H1 (cell line): ENCODE measurements at regions of chr17 and their contacts with region 1.

Region 1: DNA sequence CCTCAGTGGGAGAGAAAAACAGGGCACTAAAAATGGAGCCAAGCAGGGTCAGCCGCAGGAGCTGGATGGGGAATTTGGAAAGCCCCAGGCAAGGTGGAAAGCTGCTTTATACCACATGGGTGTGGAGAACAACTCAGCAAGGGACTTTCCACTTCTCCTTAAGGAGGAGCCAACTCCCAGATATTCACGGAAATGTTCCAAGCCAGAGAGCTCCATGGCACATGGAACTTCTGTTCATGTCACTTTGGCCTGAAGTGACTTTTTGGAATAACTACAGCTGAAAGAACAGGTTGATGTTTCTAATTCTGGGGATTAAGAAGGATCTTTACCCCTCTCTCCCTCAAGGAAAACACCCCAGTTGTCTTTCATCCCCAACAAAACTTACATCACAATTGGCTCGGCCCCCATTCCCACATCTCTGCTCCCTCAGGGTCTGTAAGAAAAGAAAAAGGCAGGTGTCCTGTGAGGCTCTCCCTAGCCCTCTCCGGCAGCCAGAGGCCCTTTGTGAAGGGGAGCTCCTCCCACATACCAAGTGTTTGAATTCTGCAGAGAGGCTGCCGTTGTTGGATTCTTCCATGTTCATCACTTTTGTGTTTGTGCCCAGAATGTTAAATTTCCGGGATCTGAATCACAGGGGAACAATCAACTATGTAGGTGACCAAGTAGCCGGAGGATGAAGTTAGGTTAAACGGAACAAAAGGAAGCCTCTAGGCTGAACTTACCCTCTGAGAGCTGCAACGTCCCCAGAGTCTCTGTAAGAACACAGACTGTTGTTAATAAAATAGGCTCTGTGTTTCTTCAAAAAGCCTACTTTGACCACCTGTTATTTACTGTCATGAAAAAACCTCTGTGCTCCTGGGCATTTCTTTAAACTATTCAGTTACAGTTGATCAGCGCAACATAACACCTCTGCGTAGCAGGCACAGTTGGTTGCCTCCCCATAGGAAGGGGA is 41.0 kb downstream of the STAT5A start:
- DNase-seq: peak; percentile 74 to 89
- H3K4me3 ChIP-seq: peak overlapping the region in 2 of 4 experiments; percentile 17 to 39; a peak in 4 of 8 replicates
- H3K27ac ChIP-seq: peak overlapping the region; percentile 86
- H3K4me1 ChIP-seq: peaks cover 0 to 20% (median 9%) of the 10 kb centered on the region in 4 experiments; a peak in 5 of 7 replicates
- H3K27me3 ChIP-seq: no peaks in the 10 kb centered on the region
- CTCF ChIP-seq: no peak
- EP300 ChIP-seq: peak in 1 of 2 experiments; percentile 63; a peak in 1 of 3 replicates
- POLR2A ChIP-seq: peak in 1 of 2 experiments; percentile 73; a peak in 2 of 3 replicates
- RAD21 ChIP-seq: no peak

Region 2: DNA sequence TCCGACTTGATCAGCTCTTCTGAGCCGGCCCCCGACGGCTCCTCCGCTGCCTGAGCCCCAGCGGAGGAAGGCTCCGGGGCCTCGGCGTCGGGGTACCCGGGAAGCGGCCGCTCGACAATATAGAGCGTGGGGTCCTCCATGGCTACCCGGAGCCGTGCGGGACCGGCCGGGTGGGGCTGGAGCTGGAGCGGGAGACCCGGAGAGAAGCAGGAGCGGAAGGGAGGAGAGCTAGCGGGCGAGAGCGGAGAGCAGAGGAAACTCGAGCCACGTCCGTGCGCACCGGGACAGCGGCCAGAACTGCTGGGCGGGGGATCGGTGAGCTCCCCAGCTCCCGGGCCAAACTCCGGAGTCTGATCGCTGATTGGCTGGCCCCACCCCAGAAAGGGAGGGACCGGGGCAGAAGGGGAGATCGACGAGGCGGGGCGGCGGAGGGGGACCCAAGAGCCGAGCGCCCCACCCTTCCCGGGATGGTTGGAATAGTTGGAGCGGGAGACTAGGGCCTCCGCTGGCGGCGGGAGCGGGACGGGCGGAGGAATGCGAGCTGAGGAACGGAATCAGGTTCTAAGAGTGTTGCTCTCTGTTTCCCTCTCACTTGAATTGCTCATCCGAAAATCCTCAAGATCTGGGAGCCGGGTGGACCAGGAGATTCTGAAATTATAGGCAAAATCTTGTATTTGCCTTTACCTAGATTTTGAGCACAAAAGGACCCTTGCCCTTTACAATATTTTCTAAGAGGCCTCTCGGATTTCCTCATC is 93.8 kb after region 1 on chr17 and contains the start of gene CAVIN1:
- CTCF ChIA-PET with region 1: interaction called, 542 read pairs
- POLR2A ChIA-PET with region 1: interaction called, 15 read pairs
- DNase-seq: peak; percentile 89 to 94
- H3K4me3 ChIP-seq: peak within 1 kb of the TSS; percentile 73 to 99 (median 86)
- H3K27ac ChIP-seq: no peak within 1 kb of the TSS
- H3K4me1 ChIP-seq: peaks cover 0 to 17% (median 8%) of the 10 kb centered on the region in 4 experiments; a peak in 5 of 7 replicates
- H3K27me3 ChIP-seq: peaks cover 0 to 13% (median 10%) of the 10 kb centered on the region in 4 experiments; a peak in 6 of 7 replicates
- CTCF ChIP-seq: no peak
- EP300 ChIP-seq: 0 out of 3 replicates have a peak, but pooled peaks of 1 of the 2 experiments have one; percentile 33
- POLR2A ChIP-seq: peak; percentile 33 to 93
- RAD21 ChIP-seq: no peak
- total RNA-seq, gene CAVIN1: 41.6 and 43.5 TPM in 2 replicates